Spleen (tissue), 13 donors: ENCODE measurements at regions of chr3 and their contacts with region 1.

Region 1: DNA sequence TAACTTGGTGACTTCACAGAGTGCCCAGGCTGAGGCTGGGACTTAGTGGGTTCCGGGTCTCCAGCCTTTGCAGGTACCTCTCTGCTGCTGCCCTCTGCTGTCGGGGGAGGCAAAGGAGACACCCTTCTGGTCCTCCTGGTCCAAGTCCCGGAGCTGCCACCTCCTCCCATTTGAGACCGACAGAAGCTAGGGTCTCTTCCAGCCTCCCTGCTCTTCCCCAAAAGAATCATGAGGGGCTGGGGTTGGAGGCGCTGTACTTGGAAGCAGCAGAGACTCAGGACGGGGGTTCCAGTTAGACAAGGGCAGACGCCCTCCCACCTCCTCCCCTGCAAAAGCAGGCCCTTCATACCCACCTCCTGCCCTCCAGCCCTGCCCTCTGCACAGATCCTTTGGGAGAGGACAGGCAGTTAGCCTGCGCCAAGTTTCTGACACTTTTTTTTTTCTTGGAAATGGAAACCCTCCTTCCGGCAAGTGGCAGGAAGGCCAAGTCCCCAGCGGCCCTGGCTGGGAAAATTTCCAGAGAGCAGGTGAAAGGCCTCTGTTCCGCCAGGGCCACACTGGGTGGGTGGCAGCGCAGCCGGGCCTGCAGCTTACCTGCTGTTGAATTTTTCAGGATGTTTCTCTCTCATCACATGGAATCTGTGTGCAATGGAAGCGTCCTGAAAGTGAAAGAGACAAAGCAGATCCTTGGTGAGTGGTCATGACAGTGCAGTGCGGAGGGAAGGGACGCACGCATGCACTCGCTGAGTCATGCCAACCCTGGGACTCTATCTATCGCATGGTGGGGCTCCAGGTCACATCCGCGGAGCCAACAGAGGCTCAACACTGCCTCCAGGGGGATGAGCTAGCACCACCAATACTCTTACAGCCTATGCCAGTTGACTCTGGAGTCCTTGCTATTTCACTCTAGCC is 119.9 kb downstream of the DGKG start:
- DNase-seq: peak; percentile 88
- H3K4me3 ChIP-seq: peak overlapping the region in 7 of 8 donors; percentile 2 to 61 (median 21)
- H3K27ac ChIP-seq: peak overlapping the region in 6 of 8 donors; percentile 5 to 73 (median 40)
- H3K4me1 ChIP-seq: peaks cover 6 to 21% (median 14%) of the 10 kb centered on the region in 6 donors
- H3K27me3 ChIP-seq: no peaks in the 10 kb centered on the region
- CTCF ChIP-seq: peak in 9 of 11 experiments; percentile 23 to 61 (median 50)
- POLR2A ChIP-seq: no peak

Region 2: DNA sequence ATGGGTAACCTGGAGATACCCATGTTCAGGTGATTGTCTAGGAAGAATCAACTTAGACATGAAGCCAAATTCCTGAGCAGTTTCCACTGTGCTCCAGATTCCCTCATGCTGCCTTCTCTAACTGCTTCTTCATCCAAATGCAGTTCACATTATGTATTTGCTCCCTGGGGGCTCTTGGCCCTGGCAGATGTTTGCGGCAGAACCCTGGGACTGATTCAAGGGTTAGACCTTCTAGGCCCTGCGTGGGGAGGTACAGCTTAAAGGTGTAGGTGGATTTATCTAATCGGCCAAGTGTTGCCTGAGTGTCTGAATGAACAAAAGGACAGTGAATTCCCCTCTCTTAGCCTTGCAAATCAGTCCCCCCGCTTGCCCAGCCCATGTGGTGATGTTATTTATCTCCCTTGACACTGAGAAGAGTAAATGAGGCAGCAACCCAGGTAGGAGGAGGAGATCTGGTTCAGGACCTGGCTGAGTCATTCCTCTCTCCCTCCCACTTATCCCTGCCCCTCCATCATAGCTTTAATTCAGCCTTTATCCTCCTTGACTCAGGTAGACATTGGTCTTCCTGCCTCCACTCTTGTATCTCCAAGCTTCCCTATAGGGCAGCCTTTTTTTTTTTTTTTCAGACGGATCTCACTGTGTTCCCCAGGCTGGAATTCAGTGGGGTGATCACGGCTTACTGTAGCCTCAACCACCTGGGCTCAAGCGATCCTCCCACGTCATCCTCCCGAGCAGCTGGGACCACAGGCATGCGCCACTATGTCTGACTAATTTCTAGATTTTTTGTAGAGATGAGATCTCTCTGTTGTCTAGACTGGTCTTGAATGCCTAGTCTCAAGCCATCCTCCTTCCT is 1585.1 kb before region 1 on chr3:
- intact Hi-C with region 1: no loop called
- DNase-seq: no peak
- H3K4me3 ChIP-seq: no peak overlapping the region
- H3K27ac ChIP-seq: no peak overlapping the region
- H3K4me1 ChIP-seq: peaks cover 0 to 20% (median 6%) of the 10 kb centered on the region in 6 donors
- H3K27me3 ChIP-seq: no peaks in the 10 kb centered on the region
- CTCF ChIP-seq: no peak
- POLR2A ChIP-seq: no peak

Region 3: GRCh38 chr3:185983495-185984141 is 258.5 kb before region 1 on chr3:
- intact Hi-C with region 1: loop called (anchors 10 kb)
- DNase-seq: peak; percentile 86
- H3K4me3 ChIP-seq: no peak overlapping the region
- H3K27ac ChIP-seq: no peak overlapping the region
- H3K4me1 ChIP-seq: peaks cover 2 to 11% (median 7%) of the 10 kb centered on the region in 6 donors
- H3K27me3 ChIP-seq: peaks cover 0 to 31% (median 11%) of the 10 kb centered on the region in 7 donors
- CTCF ChIP-seq: peak; percentile 71 to 96 (median 90)
- POLR2A ChIP-seq: no peak